HCT116 (cell line): ENCODE measurements at regions of chr2 and their contacts with region 1.

Region 1: GRCh38 chr2:160109936-160110673 is 47.7 kb upstream of the PLA2R1 start:
- DNase-seq: peak; percentile 59
- ATAC-seq: peak; percentile 99
- H3K4me3 ChIP-seq: no peak overlapping the region
- H3K27ac ChIP-seq: no peak overlapping the region
- H3K4me1 ChIP-seq: no peaks in the 10 kb centered on the region
- H3K27me3 ChIP-seq: no peaks in the 10 kb centered on the region
- CTCF ChIP-seq: peak; percentile 71 to 87 (median 82); a peak in 5 of 6 replicates
- POLR2A ChIP-seq: no peak
- RAD21 ChIP-seq: peak; percentile 95

Region 2: GRCh38 chr2:160124571-160124970 is 14.5 kb after region 1 on chr2:
- CTCF ChIA-PET with region 1: interaction called, 10 read pairs
- POLR2A ChIA-PET with region 1: no interaction called
- RAD21 ChIA-PET with region 1: no interaction called
- intact Hi-C with region 1: no loop called
- DNase-seq: no peak
- ATAC-seq: no peak
- H3K4me3 ChIP-seq: no peak overlapping the region
- H3K27ac ChIP-seq: no peak overlapping the region
- H3K4me1 ChIP-seq: no peaks in the 10 kb centered on the region
- H3K27me3 ChIP-seq: no peaks in the 10 kb centered on the region
- CTCF ChIP-seq: no peak
- POLR2A ChIP-seq: no peak
- RAD21 ChIP-seq: no peak

Region 3: DNA sequence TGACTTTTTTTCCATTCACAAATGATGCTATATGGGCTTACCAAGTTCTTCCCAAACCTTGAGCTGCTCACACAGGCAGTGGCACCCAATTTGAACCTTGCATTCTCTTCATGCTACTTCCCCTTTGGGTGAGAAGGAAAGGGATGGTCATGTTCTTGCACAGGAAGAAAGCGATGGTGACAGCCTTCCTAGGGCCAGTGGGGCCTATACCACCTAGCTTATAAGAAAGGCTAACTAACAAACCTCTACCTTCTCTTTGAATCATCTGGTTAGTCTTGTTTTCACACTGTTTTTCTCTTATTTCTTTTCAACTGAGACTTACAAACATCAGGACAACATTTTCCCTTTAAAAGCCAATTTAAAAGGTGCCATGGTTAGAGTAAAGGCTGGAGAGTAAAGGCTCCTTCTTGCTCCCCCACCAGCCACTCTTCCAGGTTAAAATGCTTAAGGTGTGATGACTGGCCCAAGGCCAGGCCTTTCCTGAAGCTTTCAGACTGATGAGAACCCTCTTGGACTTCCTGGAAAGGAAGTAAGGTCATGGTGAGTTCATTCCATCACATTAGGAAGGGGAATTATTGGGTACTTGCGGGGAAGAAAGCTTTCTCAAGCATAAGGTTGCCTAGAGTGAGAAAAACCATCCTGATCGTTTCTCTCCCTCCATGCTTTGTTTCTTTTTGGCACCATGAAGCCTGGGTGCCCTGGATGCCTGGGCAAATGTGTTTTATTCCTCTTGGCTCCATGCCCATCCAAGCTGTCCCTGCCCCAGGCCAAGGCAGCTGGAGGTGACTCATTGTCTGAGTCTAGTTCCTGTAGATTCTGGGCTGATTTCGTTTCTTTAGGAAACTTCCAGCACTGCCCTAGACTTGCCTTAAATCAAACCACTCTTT is 131.4 kb after region 1 on chr2:
- CTCF ChIA-PET with region 1: interaction called, 3 read pairs
- POLR2A ChIA-PET with region 1: interaction called, 12 read pairs
- RAD21 ChIA-PET with region 1: no interaction called
- intact Hi-C with region 1: no loop called
- DNase-seq: peak; percentile 56
- ATAC-seq: peak; percentile 81
- H3K4me3 ChIP-seq: 0 out of 4 replicates have a peak overlapping the region, but pooled peaks of 1 of the 2 experiments have one; percentile 25
- H3K27ac ChIP-seq: no peak overlapping the region
- H3K4me1 ChIP-seq: peaks cover 16 to 21% of the 10 kb centered on the region in 2 experiments
- H3K27me3 ChIP-seq: peaks cover 5% of the 10 kb centered on the region; the same call in 1 of the 2 replicates
- CTCF ChIP-seq: no peak
- POLR2A ChIP-seq: no peak
- RAD21 ChIP-seq: no peak

Region 4: DNA sequence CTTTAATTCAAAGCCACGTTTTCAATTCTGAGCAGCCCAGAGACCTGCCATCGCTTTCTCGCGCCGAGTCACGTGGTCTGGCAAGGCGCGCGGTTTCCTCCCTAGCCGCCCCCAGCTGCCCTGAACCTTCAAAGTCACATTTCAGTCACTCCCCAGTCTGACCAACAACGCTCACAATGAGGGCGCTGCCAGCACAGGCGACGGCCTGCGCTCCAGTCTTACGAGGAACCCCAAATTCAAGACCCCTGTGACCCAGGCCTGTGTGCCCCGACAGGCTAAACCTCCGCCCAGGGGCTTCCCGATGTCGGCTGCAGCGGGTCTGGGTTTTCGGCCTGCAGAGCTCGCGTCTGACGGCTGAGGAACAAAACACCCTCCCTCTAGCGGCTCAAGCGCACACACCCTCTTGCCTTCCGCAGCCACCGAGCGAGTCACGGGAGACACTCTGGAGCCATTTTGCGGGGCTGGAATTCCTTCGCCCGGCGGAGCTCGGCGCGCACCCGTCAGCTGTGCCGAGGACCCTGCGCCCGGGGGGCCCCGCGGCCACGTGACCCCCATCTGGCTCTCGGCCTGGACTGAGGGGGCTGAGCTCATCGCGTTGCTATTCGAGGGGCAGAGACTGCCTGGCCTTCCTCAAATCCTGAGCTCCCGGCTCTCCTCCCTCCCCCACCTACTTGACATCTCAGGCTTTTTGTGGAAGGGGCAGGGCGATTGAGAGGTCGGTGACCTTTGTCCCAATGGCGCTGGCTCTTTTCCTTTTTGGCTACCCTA is 159.9 kb after region 1 on chr2:
- CTCF ChIA-PET with region 1: interaction called, 4 read pairs
- POLR2A ChIA-PET with region 1: no interaction called
- RAD21 ChIA-PET with region 1: no interaction called
- intact Hi-C with region 1: loop called (anchors 5 kb)
- DNase-seq: peak; percentile 31
- ATAC-seq: peak; percentile 86
- H3K4me3 ChIP-seq: peak overlapping the region; percentile 31 to 47
- H3K27ac ChIP-seq: peak overlapping the region; percentile 23; the same call in 1 of the 2 replicates
- H3K4me1 ChIP-seq: peaks cover 3 to 26% of the 10 kb centered on the region in 2 experiments; a peak in 3 of 4 replicates
- H3K27me3 ChIP-seq: no peaks in the 10 kb centered on the region
- CTCF ChIP-seq: peak in 2 of 3 experiments; percentile 23 to 42; a peak in 2 of 6 replicates
- POLR2A ChIP-seq: no peak
- RAD21 ChIP-seq: no peak

Region 5: DNA sequence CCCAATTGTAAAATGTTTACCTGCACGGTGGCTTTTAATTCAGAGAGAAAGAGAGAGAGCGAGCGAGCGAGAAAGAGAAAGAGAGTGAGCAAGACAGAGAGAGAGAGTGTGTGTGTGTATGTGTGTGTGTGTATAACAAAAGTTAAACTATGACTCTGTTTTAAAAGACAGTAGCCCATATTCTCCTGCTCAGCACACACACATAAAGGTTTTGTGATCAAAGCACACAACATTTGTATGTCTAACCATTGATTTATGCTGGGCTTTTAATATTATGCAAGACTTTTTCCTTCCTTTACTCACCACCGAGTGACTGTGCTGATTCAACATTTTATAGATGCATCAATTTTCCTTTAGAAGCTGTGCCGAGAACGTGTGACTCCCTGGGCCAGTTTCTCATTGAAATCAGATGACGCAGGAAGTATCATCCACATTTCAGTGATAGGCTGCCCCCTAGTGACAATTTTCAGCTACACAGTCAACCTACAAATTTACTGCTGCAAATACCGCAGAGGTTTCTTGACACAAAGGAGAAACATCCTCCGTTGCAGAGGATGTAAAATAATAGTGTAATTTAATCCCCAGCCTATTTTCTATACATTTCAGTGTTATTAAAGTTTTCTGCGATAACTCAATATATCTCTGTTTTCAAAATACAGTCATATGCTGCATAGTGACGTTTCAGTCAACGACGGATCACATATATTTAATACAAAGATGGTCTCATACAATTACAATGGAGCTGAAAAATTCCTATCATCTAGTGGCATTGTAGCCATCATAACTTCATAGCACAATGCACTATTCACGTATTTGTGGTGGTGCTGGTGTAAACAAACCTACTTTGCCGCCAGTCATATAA is 884.3 kb after region 1 on chr2:
- CTCF ChIA-PET with region 1: interaction called, 17 read pairs
- POLR2A ChIA-PET with region 1: no interaction called
- RAD21 ChIA-PET with region 1: interaction called, 3 to 5 read pairs
- intact Hi-C with region 1: loop called (anchors 5 kb)
- DNase-seq: peak; percentile 66
- ATAC-seq: peak; percentile 95
- H3K4me3 ChIP-seq: no peak overlapping the region
- H3K27ac ChIP-seq: no peak overlapping the region
- H3K4me1 ChIP-seq: peaks cover 2 to 5% of the 10 kb centered on the region in 2 experiments; a peak in 2 of 4 replicates
- H3K27me3 ChIP-seq: no peaks in the 10 kb centered on the region
- CTCF ChIP-seq: peak; percentile 76 to 83 (median 76); a peak in 5 of 6 replicates
- POLR2A ChIP-seq: no peak
- RAD21 ChIP-seq: peak; percentile 94

Region 6: DNA sequence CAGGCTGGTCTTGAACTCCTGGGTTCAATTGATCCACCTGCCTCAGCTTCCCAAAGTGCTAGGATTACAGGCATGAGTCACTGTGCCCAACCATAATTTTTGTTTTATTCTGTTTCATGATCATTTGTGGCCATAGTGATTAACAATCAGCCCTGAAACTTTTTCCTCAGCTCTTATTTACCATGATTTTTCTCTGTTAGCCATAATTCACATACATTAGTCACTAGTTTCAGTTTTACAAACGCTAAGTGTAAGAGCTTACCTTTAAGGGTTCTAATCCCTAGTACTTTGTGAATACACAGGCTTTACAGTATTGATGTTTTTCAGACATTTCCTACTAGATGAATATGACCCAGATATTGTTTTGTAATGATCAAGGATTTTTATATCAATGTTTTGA is 1747.8 kb after region 1 on chr2:
- CTCF ChIA-PET with region 1: no interaction called
- POLR2A ChIA-PET with region 1: no interaction called
- RAD21 ChIA-PET with region 1: no interaction called
- intact Hi-C with region 1: no loop called
- DNase-seq: no peak
- ATAC-seq: no peak
- H3K4me3 ChIP-seq: no peak overlapping the region
- H3K27ac ChIP-seq: no peak overlapping the region
- H3K4me1 ChIP-seq: no peaks in the 10 kb centered on the region
- H3K27me3 ChIP-seq: no peaks in the 10 kb centered on the region
- CTCF ChIP-seq: no peak
- POLR2A ChIP-seq: no peak
- RAD21 ChIP-seq: no peak